ENCODE measurements at regions of chr11 and their contacts with region 1.

Region 1: DNA sequence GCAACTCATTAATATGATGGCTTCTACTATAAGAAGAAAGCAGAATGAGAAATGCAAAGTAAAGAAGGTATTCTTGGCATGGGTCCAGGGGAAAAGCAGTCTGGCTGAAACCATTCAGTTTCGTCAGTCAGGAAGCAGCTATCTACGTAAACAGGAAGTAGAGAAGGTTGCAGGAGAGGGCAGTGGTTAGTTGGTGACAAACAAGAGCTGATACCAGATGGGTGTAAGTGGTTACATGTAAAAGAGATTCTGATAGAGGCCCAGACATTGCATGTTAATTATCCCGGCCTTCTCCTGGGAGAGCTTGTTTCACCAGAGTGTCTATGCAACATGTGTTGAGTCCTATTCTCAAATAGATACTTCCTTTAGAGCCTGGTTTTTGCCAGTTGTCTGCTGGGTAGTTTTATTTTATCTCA is 58.4 kb upstream of the PSMA1 start:
- DNase-seq: peak; percentile 76
- H3K4me3 Mint-ChIP-seq: peak overlapping the region; percentile 21
- H3K27ac Mint-ChIP-seq: peak overlapping the region; percentile 84
- H3K4me1 Mint-ChIP-seq: peaks cover 71% of the 10 kb centered on the region
- H3K27me3 Mint-ChIP-seq: no peaks in the 10 kb centered on the region

Region 2: DNA sequence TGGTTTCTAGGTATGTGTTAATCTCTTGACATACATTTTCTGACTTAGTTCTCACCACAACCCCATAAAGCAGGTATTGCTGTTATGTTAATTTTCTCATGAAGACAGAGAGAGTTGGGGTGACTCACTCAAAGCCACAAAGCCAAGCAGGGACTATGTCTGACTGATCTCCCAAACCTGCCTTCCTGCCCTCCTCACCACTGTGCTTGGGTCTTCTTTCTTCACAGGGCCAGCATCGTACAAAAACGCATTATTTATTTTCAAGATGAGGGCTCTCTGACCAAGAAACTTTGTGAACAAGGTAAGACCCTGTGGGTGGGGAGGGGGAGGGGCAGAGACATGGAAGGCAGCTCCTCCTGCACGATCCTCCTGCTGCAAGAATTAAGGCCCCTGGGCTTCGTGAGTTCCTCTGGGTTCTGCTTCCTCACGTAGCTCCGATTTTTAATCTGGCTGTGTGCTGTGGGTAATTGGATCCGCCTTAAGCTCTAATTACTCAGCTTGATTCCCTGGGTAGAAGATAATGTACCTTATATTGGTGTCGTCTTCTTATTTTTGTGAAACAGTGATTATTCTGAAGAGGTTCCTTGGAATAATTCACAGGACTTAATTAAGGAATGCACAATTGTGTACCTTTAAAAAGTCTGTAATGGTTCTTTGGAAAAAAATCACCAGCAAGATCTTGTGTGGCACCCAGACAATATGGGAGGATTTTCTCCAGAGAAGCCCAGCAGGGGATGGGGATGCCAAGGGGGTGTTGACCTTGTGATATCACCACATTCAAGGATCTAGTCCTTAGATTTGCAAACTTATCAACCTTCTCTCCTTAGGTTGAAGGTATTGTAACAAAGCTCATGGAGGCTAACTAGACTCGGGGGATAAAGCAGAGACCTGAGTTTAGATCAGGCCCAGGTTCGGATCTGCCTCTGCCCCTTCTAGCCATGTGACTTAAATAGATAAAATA is 503.2 kb before region 1 on chr11:
- intact Hi-C with region 1: loop called (anchors 10 kb)
- DNase-seq: peak; percentile 46
- H3K4me3 Mint-ChIP-seq: no peak overlapping the region
- H3K27ac Mint-ChIP-seq: no peak overlapping the region
- H3K4me1 Mint-ChIP-seq: peaks cover 28% of the 10 kb centered on the region
- H3K27me3 Mint-ChIP-seq: peaks cover 21% of the 10 kb centered on the region

Region 3: DNA sequence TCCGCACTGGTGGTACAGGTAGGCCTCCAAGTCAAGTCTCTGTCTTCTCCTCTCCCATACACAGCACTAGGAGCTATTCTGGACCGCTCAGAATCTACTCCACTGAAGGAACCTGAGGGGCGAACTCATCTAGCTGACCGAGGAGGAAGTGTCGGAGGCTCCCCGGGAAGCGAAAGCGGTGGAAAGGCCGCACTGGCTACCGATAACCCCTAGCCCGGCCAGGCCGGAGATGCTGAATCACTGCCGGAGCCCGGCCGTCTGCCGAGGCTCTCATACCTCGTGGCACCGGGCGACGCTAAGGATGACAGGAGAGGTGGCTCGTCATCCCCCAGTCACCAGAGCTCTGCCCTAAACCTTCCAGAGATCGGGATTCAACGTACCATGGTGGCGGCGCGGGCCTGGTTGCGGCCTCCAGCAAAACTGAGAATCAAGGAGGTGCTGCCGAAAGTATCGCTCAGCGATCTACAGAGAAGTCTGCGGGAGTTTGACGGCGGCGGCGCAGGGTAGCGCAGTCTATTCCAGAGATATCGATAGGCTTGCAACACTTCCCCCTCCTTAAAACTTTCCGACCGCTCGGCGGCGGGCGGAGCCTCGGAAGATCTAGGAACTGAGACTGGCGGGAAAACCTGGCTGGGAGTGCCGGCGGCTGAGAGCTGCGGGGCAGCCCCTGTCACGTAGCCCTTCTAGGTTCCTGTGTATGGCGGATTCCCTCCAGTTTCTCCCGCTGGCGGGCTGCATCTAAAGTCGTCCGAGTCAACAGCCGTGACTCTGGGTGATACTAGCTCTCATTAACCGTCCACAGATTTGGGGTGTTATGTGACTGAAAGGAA is 58.4 kb before region 1 on chr11 and contains the start of gene PSMA1:
- intact Hi-C with region 1: loop called (anchors 1 kb)
- DNase-seq: peak; percentile 92
- H3K4me3 Mint-ChIP-seq: peak within 1 kb of the TSS; percentile 94
- H3K27ac Mint-ChIP-seq: peak within 1 kb of the TSS; percentile 94
- H3K4me1 Mint-ChIP-seq: peaks cover 33% of the 10 kb centered on the region
- H3K27me3 Mint-ChIP-seq: no peaks in the 10 kb centered on the region
- total RNA-seq, gene PSMA1: 313 and 340 TPM in 2 replicates

Region 4: DNA sequence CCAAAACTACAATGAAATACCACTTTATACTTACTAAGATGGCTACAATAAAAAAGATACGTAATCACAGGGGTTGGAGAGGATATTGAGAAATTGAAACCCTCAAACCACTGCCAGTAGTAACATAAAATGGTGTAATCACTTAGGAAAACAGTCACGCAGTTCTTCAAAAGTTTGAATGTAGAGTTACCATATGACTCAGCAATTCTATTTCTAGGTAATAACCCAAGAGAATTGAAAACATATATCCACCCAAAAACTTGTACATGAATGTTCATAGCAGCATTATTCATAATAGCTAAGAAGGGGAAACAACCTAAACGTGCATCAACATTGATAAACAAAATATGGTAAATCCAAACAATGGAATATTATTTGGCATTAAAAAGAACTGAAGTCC is 33.9 kb before region 1 on chr11:
- intact Hi-C with region 1: loop called (anchors 1 kb)
- DNase-seq: no peak
- H3K4me3 Mint-ChIP-seq: peak overlapping the region; percentile 45
- H3K27ac Mint-ChIP-seq: peak overlapping the region; percentile 91
- H3K4me1 Mint-ChIP-seq: peaks cover 73% of the 10 kb centered on the region
- H3K27me3 Mint-ChIP-seq: no peaks in the 10 kb centered on the region

Region 5: GRCh38 chr11:14636119-14636518 is 57.6 kb after region 1 on chr11:
- intact Hi-C with region 1: loop called (anchors 1 kb)
- DNase-seq: no peak
- H3K4me3 Mint-ChIP-seq: peak overlapping the region; percentile 31
- H3K27ac Mint-ChIP-seq: peak overlapping the region; percentile 50
- H3K4me1 Mint-ChIP-seq: peaks cover 62% of the 10 kb centered on the region
- H3K27me3 Mint-ChIP-seq: no peaks in the 10 kb centered on the region

Measured in activated T-helper 1 cell treated with anti-CD3 and anti-CD28 coated beads, Interleukin-12 subunit alpha, Interleukin-12 subunit beta, Interleukin-2, Interleukin-4 antibody, amounts not matched to agents 30 ng/mL and 10 ng/mL and 1 ng/mL, durations not matched to agents 14 hours and 24 hours and 36 hours (primary cell).